Caco-2 (cell line): ENCODE measurements at regions of chr12 and their contacts with region 1.

Region 1: DNA sequence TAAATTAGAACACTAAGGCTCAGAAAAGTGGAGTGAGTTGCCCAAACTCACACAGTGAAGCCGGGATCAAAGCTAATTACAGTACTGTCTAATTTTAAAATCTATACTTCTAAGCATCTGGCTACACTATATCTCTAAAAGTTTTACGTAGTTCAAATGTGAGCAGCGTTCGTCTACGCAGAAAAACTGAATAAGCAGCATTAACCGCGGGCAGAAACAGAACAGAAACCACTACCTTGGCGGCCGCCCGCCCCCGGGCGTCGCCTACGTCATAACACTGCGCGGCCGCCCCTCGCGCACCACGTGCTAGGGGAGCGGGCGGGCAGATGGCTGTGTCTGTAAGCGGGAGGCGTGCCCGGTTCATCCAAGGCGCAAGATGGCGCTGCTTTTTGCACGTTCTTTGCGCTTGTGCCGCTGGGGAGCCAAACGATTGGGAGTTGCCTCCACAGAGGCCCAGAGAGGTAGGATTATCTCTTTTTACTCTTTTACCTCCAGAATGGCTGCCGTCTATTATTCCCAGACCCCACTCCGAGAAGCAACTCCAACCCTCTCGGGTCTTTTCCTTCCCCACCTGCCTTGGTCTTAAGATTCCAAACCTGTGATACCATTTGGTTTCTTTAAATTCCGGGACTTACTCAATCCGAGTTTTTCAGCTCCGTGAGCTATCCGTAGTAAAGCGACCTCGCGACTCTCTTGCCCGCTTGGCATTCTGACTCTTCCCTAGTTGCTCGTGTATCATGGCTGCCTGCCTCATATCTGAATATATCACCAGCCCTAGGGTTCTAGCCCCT is at the start of gene SPRYD4:
- DNase-seq: peak; percentile 89 to 92
- H3K4me3 ChIP-seq: peak within 1 kb of the TSS; percentile 66
- H3K4me3 Mint-ChIP-seq: peak within 1 kb of the TSS; percentile 96
- H3K27ac Mint-ChIP-seq: peak within 1 kb of the TSS; percentile 99
- H3K4me1 ChIP-seq: peaks cover 15% of the 10 kb centered on the region; the same call in 1 of the 2 replicates
- H3K4me1 Mint-ChIP-seq: peaks cover 6% of the 10 kb centered on the region
- H3K27me3 ChIP-seq: no peaks in the 10 kb centered on the region
- H3K27me3 Mint-ChIP-seq: no peaks in the 10 kb centered on the region
- CTCF ChIP-seq: peak in 1 of 2 experiments; percentile 38
- total RNA-seq, gene SPRYD4: 2.8 TPM in 2 replicates

Region 2: GRCh38 chr12:56286044-56286830 is 182.2 kb before region 1 on chr12:
- CTCF ChIA-PET with region 1: interaction called, 11 read pairs
- POLR2A ChIA-PET with region 1: no interaction called
- intact Hi-C with region 1: loop called (anchors 1 kb)
- DNase-seq: no peak
- H3K4me3 ChIP-seq: no peak overlapping the region
- H3K4me3 Mint-ChIP-seq: peak overlapping the region; percentile 1
- H3K27ac Mint-ChIP-seq: peak overlapping the region; percentile 58
- H3K4me1 ChIP-seq: peaks cover 24% of the 10 kb centered on the region
- H3K4me1 Mint-ChIP-seq: peaks cover 21% of the 10 kb centered on the region
- H3K27me3 ChIP-seq: no peaks in the 10 kb centered on the region
- H3K27me3 Mint-ChIP-seq: no peaks in the 10 kb centered on the region
- CTCF ChIP-seq: no peak

Region 3: GRCh38 chr12:56333679-56334489 is 134.5 kb before region 1 on chr12 and contains the start of gene PAN2:
- CTCF ChIA-PET with region 1: interaction called, 5 read pairs
- POLR2A ChIA-PET with region 1: interaction called, 3 read pairs
- intact Hi-C with region 1: loop called (anchors 1 kb)
- DNase-seq: peak; percentile 94 to 97
- H3K4me3 ChIP-seq: peak within 1 kb of the TSS; percentile 63
- H3K4me3 Mint-ChIP-seq: peak within 1 kb of the TSS; percentile 98
- H3K27ac Mint-ChIP-seq: peak within 1 kb of the TSS; percentile 99
- H3K4me1 ChIP-seq: peaks cover 17% of the 10 kb centered on the region
- H3K4me1 Mint-ChIP-seq: peaks cover 8% of the 10 kb centered on the region
- H3K27me3 ChIP-seq: no peaks in the 10 kb centered on the region
- H3K27me3 Mint-ChIP-seq: no peaks in the 10 kb centered on the region
- CTCF ChIP-seq: peak; percentile 65 to 77
- total RNA-seq, gene PAN2: 25.7 and 30.0 TPM in 2 replicates

Region 4: GRCh38 chr12:56366948-56367347 is 101.5 kb before region 1 on chr12:
- CTCF ChIA-PET with region 1: no interaction called
- POLR2A ChIA-PET with region 1: no interaction called
- intact Hi-C with region 1: no loop called
- DNase-seq: no peak
- H3K4me3 ChIP-seq: no peak overlapping the region
- H3K4me3 Mint-ChIP-seq: no peak overlapping the region
- H3K27ac Mint-ChIP-seq: no peak overlapping the region
- H3K4me1 ChIP-seq: no peaks in the 10 kb centered on the region
- H3K4me1 Mint-ChIP-seq: peaks cover 12% of the 10 kb centered on the region
- H3K27me3 ChIP-seq: no peaks in the 10 kb centered on the region
- H3K27me3 Mint-ChIP-seq: no peaks in the 10 kb centered on the region
- CTCF ChIP-seq: no peak

Region 5: GRCh38 chr12:56377310-56377988 is 91.0 kb before region 1 on chr12:
- CTCF ChIA-PET with region 1: interaction called, 6 read pairs
- POLR2A ChIA-PET with region 1: no interaction called
- intact Hi-C with region 1: loop called (anchors 1 kb)
- DNase-seq: peak in 1 of 2 experiments; percentile 45
- H3K4me3 ChIP-seq: no peak overlapping the region
- H3K4me3 Mint-ChIP-seq: peak overlapping the region; percentile 4
- H3K27ac Mint-ChIP-seq: peak overlapping the region; percentile 61
- H3K4me1 ChIP-seq: peaks cover 25% of the 10 kb centered on the region
- H3K4me1 Mint-ChIP-seq: peaks cover 15% of the 10 kb centered on the region
- H3K27me3 ChIP-seq: no peaks in the 10 kb centered on the region
- H3K27me3 Mint-ChIP-seq: no peaks in the 10 kb centered on the region
- CTCF ChIP-seq: no peak